MCF 10A (cell line): ENCODE measurements at regions of chr17 and their contacts with region 1.

Region 1: GRCh38 chr17:6843241-6843880 is 11.8 kb upstream of the TEKT1 start:
- DNase-seq: peak; percentile 65
- H3K4me3 Mint-ChIP-seq: no peak overlapping the region
- H3K27ac Mint-ChIP-seq: no peak overlapping the region
- H3K4me1 Mint-ChIP-seq: no peaks in the 10 kb centered on the region
- H3K27me3 Mint-ChIP-seq: peaks cover 16% of the 10 kb centered on the region
- CTCF ChIP-seq: peak; percentile 45

Region 2: GRCh38 chr17:6011206-6011605 is 832.2 kb before region 1 on chr17:
- CTCF ChIA-PET with region 1: no interaction called
- POLR2A ChIA-PET with region 1: no interaction called
- intact Hi-C with region 1: no loop called
- DNase-seq: no peak
- H3K4me3 Mint-ChIP-seq: no peak overlapping the region
- H3K27ac Mint-ChIP-seq: no peak overlapping the region
- H3K4me1 Mint-ChIP-seq: peaks cover 5% of the 10 kb centered on the region
- H3K27me3 Mint-ChIP-seq: no peaks in the 10 kb centered on the region
- CTCF ChIP-seq: no peak

Region 3: GRCh38 chr17:6666077-6666521 is 177.3 kb before region 1 on chr17:
- CTCF ChIA-PET with region 1: interaction called, 24 read pairs
- POLR2A ChIA-PET with region 1: interaction called, 4 read pairs
- intact Hi-C with region 1: loop called (anchors 1 kb)
- DNase-seq: peak; percentile 86
- H3K4me3 Mint-ChIP-seq: no peak overlapping the region
- H3K27ac Mint-ChIP-seq: no peak overlapping the region
- H3K4me1 Mint-ChIP-seq: peaks cover 30% of the 10 kb centered on the region
- H3K27me3 Mint-ChIP-seq: peaks cover 5% of the 10 kb centered on the region
- CTCF ChIP-seq: peak; percentile 93

Region 4: GRCh38 chr17:6701719-6702118 is 141.6 kb before region 1 on chr17:
- CTCF ChIA-PET with region 1: no interaction called
- POLR2A ChIA-PET with region 1: no interaction called
- intact Hi-C with region 1: no loop called
- DNase-seq: peak; percentile 35
- H3K4me3 Mint-ChIP-seq: no peak overlapping the region
- H3K27ac Mint-ChIP-seq: no peak overlapping the region
- H3K4me1 Mint-ChIP-seq: no peaks in the 10 kb centered on the region
- H3K27me3 Mint-ChIP-seq: no peaks in the 10 kb centered on the region
- CTCF ChIP-seq: peak; percentile 18

Region 5: DNA sequence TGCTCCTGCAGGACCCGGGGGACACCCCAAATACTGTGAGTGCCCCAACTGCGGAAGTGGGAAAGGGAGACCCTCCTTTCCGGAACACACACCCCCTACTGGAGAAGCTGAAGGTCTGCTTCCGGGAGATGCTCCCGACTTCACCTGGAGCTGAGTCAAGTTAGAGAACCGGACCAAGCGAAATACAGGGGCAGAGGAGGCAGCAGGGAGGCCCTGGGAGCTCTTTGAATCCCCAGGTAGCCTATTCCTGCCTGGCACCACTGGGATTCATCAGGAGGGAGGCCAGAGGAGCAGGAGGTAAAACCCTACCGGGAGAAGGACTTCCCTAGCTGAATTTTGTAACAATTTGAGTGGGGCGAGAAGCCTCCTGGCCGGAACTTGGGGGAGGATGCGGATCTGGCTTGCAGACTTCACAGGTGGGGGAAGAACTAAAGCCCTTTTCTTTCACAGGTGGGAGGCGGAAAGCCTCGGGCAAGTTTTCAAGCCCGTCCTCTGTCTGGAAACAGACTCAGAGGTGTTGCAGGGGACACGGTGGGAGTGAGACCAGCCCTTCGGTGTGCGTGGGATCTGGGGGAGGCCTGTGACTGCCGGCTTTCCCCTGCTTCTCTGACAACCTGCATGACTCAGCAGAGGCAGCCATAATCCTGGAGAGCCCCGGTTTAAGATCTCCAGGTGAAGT is 10.5 kb after region 1 on chr17:
- CTCF ChIA-PET with region 1: interaction called, 29 read pairs
- POLR2A ChIA-PET with region 1: interaction called, 11 read pairs
- intact Hi-C with region 1: no loop called
- DNase-seq: peak; percentile 71
- H3K4me3 Mint-ChIP-seq: peak overlapping the region; percentile 86
- H3K27ac Mint-ChIP-seq: peak overlapping the region; percentile 94
- H3K4me1 Mint-ChIP-seq: peaks cover 14% of the 10 kb centered on the region
- H3K27me3 Mint-ChIP-seq: no peaks in the 10 kb centered on the region
- CTCF ChIP-seq: peak; percentile 52

Region 6: GRCh38 chr17:6913608-6914443 is 70.5 kb after region 1 on chr17:
- CTCF ChIA-PET with region 1: interaction called, 21 read pairs
- POLR2A ChIA-PET with region 1: interaction called, 4 read pairs
- intact Hi-C with region 1: loop called (anchors 1 kb)
- DNase-seq: peak; percentile 16
- H3K4me3 Mint-ChIP-seq: no peak overlapping the region
- H3K27ac Mint-ChIP-seq: no peak overlapping the region
- H3K4me1 Mint-ChIP-seq: no peaks in the 10 kb centered on the region
- H3K27me3 Mint-ChIP-seq: no peaks in the 10 kb centered on the region
- CTCF ChIP-seq: peak; percentile 51

Region 7: GRCh38 chr17:7021993-7022778 is 178.8 kb after region 1 on chr17:
- CTCF ChIA-PET with region 1: interaction called, 48 read pairs
- POLR2A ChIA-PET with region 1: no interaction called
- intact Hi-C with region 1: no loop called
- DNase-seq: peak; percentile 75
- H3K4me3 Mint-ChIP-seq: no peak overlapping the region
- H3K27ac Mint-ChIP-seq: no peak overlapping the region
- H3K4me1 Mint-ChIP-seq: peaks cover 23% of the 10 kb centered on the region
- H3K27me3 Mint-ChIP-seq: no peaks in the 10 kb centered on the region
- CTCF ChIP-seq: peak; percentile 84